GM18951 (cell line): ENCODE measurements at regions of chr16 and their contacts with region 1.

Region 1: GRCh38 chr16:58336332-58337089 is 41.7 kb upstream of the PRSS54 start:
- POLR2A ChIP-seq: no peak

Region 2: GRCh38 chr16:57775661-57776469 is 560.6 kb before region 1 on chr16:
- in situ Hi-C with region 1: no loop called
- POLR2A ChIP-seq: no peak

Region 3: DNA sequence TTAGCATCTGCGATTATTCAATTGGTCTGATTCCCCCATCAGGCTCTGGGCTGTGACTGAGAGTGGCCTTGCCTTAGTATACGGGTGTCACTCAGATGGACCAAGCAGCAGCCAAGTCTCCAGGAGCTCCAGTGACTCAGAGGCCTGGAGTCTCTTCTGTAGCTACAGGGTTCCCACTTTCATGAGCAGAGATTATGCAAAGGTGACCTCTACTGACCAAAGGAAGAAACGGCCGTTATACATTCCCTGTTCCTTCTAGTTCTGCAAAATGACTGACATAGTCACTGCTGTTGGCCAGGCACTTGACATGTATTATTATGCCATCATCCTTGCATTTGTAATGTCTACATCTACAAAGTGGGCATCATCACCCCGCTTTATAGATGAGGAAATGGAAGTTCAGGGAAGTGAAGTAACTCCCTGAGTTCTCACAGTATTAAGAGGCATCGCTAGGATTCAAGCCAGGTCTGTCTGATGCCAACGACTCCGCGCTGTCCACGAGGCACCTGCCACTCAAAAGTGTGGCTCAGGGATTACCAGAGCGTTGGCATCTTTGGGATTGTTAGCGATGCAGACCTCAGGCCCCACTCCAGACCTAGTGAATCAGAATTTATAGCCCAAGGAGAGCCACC is 324.8 kb after region 1 on chr16:
- in situ Hi-C with region 1: loop called (anchors 25 kb)
- POLR2A ChIP-seq: no peak